Gastrocnemius medialis (tissue), 4 donors: ENCODE measurements at regions of chr17 and their contacts with region 1.

Region 1: GRCh38 chr17:52235516-52235915 is 77.0 kb upstream of the CA10 start:
- DNase-seq: no peak
- ATAC-seq: no peak
- H3K4me3 ChIP-seq: no peak overlapping the region
- H3K27ac ChIP-seq: no peak overlapping the region
- H3K4me1 ChIP-seq: no peaks in the 10 kb centered on the region
- H3K27me3 ChIP-seq: no peaks in the 10 kb centered on the region
- CTCF ChIP-seq: no peak
- POLR2A ChIP-seq: no peak

Region 2: DNA sequence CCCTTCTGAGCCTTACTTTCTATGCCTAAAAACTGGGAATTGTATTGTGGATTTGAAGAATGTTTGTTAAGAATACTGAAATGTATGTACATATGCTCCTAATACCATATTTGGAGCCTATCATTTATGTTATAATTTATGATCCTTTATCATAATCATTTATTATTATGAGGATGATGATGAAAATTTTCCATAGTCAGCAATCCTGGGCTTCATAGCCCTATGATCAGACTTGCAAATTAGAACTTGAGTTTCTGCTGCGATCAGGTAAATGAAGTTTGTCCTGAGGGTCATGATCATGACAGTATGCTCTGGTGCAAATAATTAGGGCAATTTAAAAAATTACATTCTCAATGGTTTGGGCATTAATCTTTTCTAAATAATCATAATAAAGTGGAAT is 224.4 kb before region 1 on chr17:
- in situ Hi-C with region 1: no loop called
- intact Hi-C with region 1: no loop called
- DNase-seq: no peak
- ATAC-seq: no peak
- H3K4me3 ChIP-seq: no peak overlapping the region
- H3K27ac ChIP-seq: no peak overlapping the region
- H3K4me1 ChIP-seq: no peaks in the 10 kb centered on the region
- H3K27me3 ChIP-seq: no peaks in the 10 kb centered on the region
- CTCF ChIP-seq: no peak
- POLR2A ChIP-seq: no peak

Region 3: GRCh38 chr17:52170963-52171572 is 64.4 kb before region 1 on chr17:
- in situ Hi-C with region 1: loop called in 1 of 4 experiments (anchors 10 kb)
- intact Hi-C with region 1: no loop called
- DNase-seq: no peak
- ATAC-seq: no peak
- H3K4me3 ChIP-seq: no peak overlapping the region
- H3K27ac ChIP-seq: no peak overlapping the region
- H3K4me1 ChIP-seq: no peaks in the 10 kb centered on the region
- H3K27me3 ChIP-seq: no peaks in the 10 kb centered on the region
- CTCF ChIP-seq: no peak
- POLR2A ChIP-seq: no peak